ENCODE measurements at regions of chr18 and their contacts with region 1.

Region 1: GRCh38 chr18:9614401-9615279 is at the start of gene PPP4R1:
- DNase-seq: no peak
- H3K4me3 ChIP-seq: peak within 1 kb of the TSS; percentile 71
- CTCF ChIP-seq: no peak

Region 2: DNA sequence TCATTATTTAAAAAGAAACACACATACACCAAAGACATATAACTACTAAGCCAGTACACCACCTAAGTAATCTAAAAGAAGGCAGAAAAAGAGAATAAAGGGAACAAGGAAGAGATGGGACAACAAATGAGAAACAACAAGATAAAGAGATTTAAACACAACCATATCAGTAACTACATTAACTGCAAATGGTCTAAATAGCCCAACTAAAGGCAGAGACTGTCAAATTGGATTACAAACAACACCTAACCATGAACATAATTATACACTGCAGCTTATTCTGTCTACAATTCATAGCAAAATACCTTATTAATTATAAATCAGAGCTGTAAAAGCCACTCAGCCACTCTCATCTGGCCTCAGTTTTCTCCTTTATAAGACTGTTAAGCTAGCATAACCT is 15.3 kb before region 1 on chr18:
- CTCF ChIA-PET with region 1: interaction called, 29 read pairs
- POLR2A ChIA-PET with region 1: no interaction called
- DNase-seq: no peak
- H3K4me3 ChIP-seq: no peak overlapping the region
- CTCF ChIP-seq: no peak

Region 3: GRCh38 chr18:9700261-9700796 is 85.7 kb after region 1 on chr18:
- CTCF ChIA-PET with region 1: interaction called, 4 read pairs
- POLR2A ChIA-PET with region 1: interaction called, 10 read pairs
- DNase-seq: no peak
- H3K4me3 ChIP-seq: no peak overlapping the region
- CTCF ChIP-seq: no peak

Measured in AG04449 (cell line).